ENCODE measurements at regions of chr11 and their contacts with region 1.

Region 1: GRCh38 chr11:126211235-126212088 is at the starts of genes FAM118B and RPUSD4:
- DNase-seq: peak; percentile 96 to 99 (median 98)
- ATAC-seq: peak; percentile 99
- H3K4me3 ChIP-seq: peak within 1 kb of the TSS; percentile 100
- H3K4me3 Mint-ChIP-seq: peak within 1 kb of the TSS; percentile 93 to 100 (median 98)
- H3K27ac ChIP-seq: peak within 1 kb of the TSS; percentile 84
- H3K27ac Mint-ChIP-seq: peak within 1 kb of the TSS; percentile 90 to 99 (median 96)
- H3K4me1 ChIP-seq: peaks cover 12 to 15% of the 10 kb centered on the region in 2 donors
- H3K4me1 Mint-ChIP-seq: peaks cover 28 to 57% (median 38%) of the 10 kb centered on the region in 7 donors
- H3K27me3 ChIP-seq: no peaks in the 10 kb centered on the region
- H3K27me3 Mint-ChIP-seq: peaks cover 0 to 6% (median 0%) of the 10 kb centered on the region in 5 donors
- total RNA-seq, gene FAM118B: 4.0 to 10.9 (median 10.5) TPM
- total RNA-seq, gene RPUSD4: 30.1 to 49.6 (median 43.8) TPM

Region 2: GRCh38 chr11:124739479-124740276 is 1471.8 kb before region 1 on chr11 and contains the start of gene NRGN:
- CTCF ChIA-PET with region 1: no interaction called
- POLR2A ChIA-PET with region 1: no interaction called
- intact Hi-C with region 1: loop called in 1 of 2 experiments (anchors 10 kb)
- DNase-seq: peak; percentile 64 to 84 (median 77)
- ATAC-seq: peak; percentile 94
- H3K4me3 ChIP-seq: peak within 1 kb of the TSS; percentile 63
- H3K4me3 Mint-ChIP-seq: peak within 1 kb of the TSS; percentile 78 to 90 (median 86)
- H3K27ac ChIP-seq: peak within 1 kb of the TSS; percentile 38
- H3K27ac Mint-ChIP-seq: peak within 1 kb of the TSS in 8 of 9 donors; percentile 25 to 75 (median 56)
- H3K4me1 ChIP-seq: peaks cover 0 to 5% of the 10 kb centered on the region in 2 donors
- H3K4me1 Mint-ChIP-seq: peaks cover 18 to 33% (median 19%) of the 10 kb centered on the region in 7 donors
- H3K27me3 ChIP-seq: no peaks in the 10 kb centered on the region
- H3K27me3 Mint-ChIP-seq: peaks cover 0 to 65% (median 9%) of the 10 kb centered on the region in 5 donors
- total RNA-seq, gene NRGN: 1.2 to 48.7 (median 4.9) TPM

Region 3: DNA sequence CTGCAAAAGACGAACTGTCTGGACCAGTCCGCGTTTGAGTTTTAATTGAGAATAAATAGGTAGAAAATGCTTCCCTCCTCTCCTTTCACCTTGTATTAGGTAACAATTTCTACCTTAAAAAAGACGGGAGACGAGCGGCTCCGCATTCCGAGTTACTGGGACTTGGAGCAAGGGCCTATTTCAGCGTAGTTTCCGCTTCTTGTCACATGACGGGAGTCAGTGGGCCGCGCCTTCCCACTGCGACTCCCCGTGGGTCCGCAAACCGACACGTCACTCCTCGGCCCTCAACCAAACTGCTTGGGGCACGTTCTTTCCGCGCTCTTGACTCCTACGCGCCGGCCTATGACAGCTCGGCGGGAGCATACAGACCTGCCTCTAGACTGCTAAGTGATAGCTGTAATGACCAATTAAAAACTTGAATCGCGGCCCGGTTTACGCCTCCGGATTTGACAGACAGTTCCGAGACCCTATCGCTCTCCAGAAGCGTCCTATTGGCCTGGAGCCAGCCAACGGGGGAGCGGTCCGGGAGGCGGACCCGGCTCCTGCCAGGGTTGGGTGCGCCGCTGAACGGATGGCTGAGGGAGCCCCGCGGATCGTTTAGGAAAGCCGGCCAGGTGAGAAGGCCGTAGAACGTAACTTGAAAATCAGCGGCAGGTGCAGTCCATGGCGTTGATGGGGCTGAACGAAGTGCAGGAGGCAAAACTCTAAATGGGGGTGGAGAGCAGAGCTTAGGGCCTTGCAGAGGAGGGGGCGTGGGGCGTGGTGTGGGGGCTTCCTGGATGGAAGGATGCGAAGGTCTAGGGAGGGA is 619.0 kb before region 1 on chr11 and contains the start of gene STT3A:
- CTCF ChIA-PET with region 1: no interaction called
- POLR2A ChIA-PET with region 1: no interaction called
- intact Hi-C with region 1: loop called (anchors 1 kb)
- DNase-seq: peak; percentile 94 to 99 (median 99)
- ATAC-seq: peak; percentile 96
- H3K4me3 ChIP-seq: peak within 1 kb of the TSS; percentile 94
- H3K4me3 Mint-ChIP-seq: peak within 1 kb of the TSS; percentile 88 to 99 (median 96)
- H3K27ac ChIP-seq: peak within 1 kb of the TSS; percentile 95
- H3K27ac Mint-ChIP-seq: peak within 1 kb of the TSS; percentile 94 to 100 (median 99)
- H3K4me1 ChIP-seq: peaks cover 13% of the 10 kb centered on the region in 2 donors
- H3K4me1 Mint-ChIP-seq: peaks cover 30 to 62% (median 53%) of the 10 kb centered on the region in 7 donors
- H3K27me3 ChIP-seq: no peaks in the 10 kb centered on the region
- H3K27me3 Mint-ChIP-seq: no peaks in the 10 kb centered on the region
- total RNA-seq, gene STT3A: 39.6 to 153 (median 84.5) TPM

Region 4: GRCh38 chr11:126062679-126063506 is 148.6 kb before region 1 on chr11 and contains the start of gene CDON:
- CTCF ChIA-PET with region 1: no interaction called
- POLR2A ChIA-PET with region 1: interaction called, 8 read pairs
- intact Hi-C with region 1: loop called (anchors 1 kb)
- DNase-seq: peak; percentile 88 to 97 (median 93)
- ATAC-seq: peak; percentile 92
- H3K4me3 ChIP-seq: peak within 1 kb of the TSS; percentile 83
- H3K4me3 Mint-ChIP-seq: peak within 1 kb of the TSS; percentile 79 to 93 (median 92)
- H3K27ac ChIP-seq: peak within 1 kb of the TSS; percentile 76
- H3K27ac Mint-ChIP-seq: peak within 1 kb of the TSS; percentile 79 to 98 (median 97)
- H3K4me1 ChIP-seq: peaks cover 4 to 5% of the 10 kb centered on the region in 2 donors
- H3K4me1 Mint-ChIP-seq: peaks cover 5 to 17% (median 7%) of the 10 kb centered on the region in 7 donors
- H3K27me3 ChIP-seq: no peaks in the 10 kb centered on the region
- H3K27me3 Mint-ChIP-seq: peaks cover 0 to 56% (median 5%) of the 10 kb centered on the region in 5 donors
- total RNA-seq, gene CDON: 1.5 to 4.8 (median 2.3) TPM

Region 5: GRCh38 chr11:126146433-126147192 is 64.8 kb before region 1 on chr11:
- CTCF ChIA-PET with region 1: no interaction called
- POLR2A ChIA-PET with region 1: no interaction called
- intact Hi-C with region 1: no loop called
- DNase-seq: no peak
- ATAC-seq: no peak
- H3K4me3 ChIP-seq: no peak overlapping the region
- H3K4me3 Mint-ChIP-seq: no peak overlapping the region
- H3K27ac ChIP-seq: no peak overlapping the region
- H3K27ac Mint-ChIP-seq: no peak overlapping the region
- H3K4me1 ChIP-seq: no peaks in the 10 kb centered on the region
- H3K4me1 Mint-ChIP-seq: peaks cover 0 to 2% (median 0%) of the 10 kb centered on the region in 7 donors
- H3K27me3 ChIP-seq: no peaks in the 10 kb centered on the region
- H3K27me3 Mint-ChIP-seq: peaks cover 0 to 14% (median 5%) of the 10 kb centered on the region in 5 donors

Region 6: GRCh38 chr11:126282736-126283591 is 71.5 kb after region 1 on chr11 and contains the start of gene TIRAP:
- CTCF ChIA-PET with region 1: no interaction called
- POLR2A ChIA-PET with region 1: interaction called, 3 read pairs
- intact Hi-C with region 1: loop called (anchors 1 kb)
- DNase-seq: peak; percentile 55 to 77 (median 75)
- ATAC-seq: peak; percentile 79
- H3K4me3 ChIP-seq: peak within 1 kb of the TSS; percentile 77
- H3K4me3 Mint-ChIP-seq: peak within 1 kb of the TSS; percentile 88 to 100 (median 98)
- H3K27ac ChIP-seq: peak within 1 kb of the TSS; percentile 86
- H3K27ac Mint-ChIP-seq: peak within 1 kb of the TSS; percentile 93 to 99 (median 97)
- H3K4me1 ChIP-seq: peaks cover 16 to 28% of the 10 kb centered on the region in 2 donors
- H3K4me1 Mint-ChIP-seq: peaks cover 35 to 62% (median 55%) of the 10 kb centered on the region in 7 donors
- H3K27me3 ChIP-seq: no peaks in the 10 kb centered on the region
- H3K27me3 Mint-ChIP-seq: no peaks in the 10 kb centered on the region
- total RNA-seq, gene TIRAP: 12.9 to 21.5 (median 17.9) TPM

Measured in naive thymus-derived CD4-positive, alpha-beta T cell (primary cell).